Left lung (tissue), 14 donors: ENCODE measurements at regions of chr11 and their contacts with region 1.

Region 1: GRCh38 chr11:9757809-9758636 is 94.1 kb downstream of the SWAP70 start:
- DNase-seq: peak; percentile 78 to 97 (median 90)
- ATAC-seq: peak; percentile 90
- H3K4me3 ChIP-seq: peak overlapping the region; percentile 62 to 79
- H3K27ac ChIP-seq: peak overlapping the region; percentile 83 to 90
- H3K4me1 ChIP-seq: peaks cover 6 to 44% of the 10 kb centered on the region in 2 donors
- H3K27me3 ChIP-seq: no peaks in the 10 kb centered on the region
- CTCF ChIP-seq: peak; percentile 85 to 91

Region 2: DNA sequence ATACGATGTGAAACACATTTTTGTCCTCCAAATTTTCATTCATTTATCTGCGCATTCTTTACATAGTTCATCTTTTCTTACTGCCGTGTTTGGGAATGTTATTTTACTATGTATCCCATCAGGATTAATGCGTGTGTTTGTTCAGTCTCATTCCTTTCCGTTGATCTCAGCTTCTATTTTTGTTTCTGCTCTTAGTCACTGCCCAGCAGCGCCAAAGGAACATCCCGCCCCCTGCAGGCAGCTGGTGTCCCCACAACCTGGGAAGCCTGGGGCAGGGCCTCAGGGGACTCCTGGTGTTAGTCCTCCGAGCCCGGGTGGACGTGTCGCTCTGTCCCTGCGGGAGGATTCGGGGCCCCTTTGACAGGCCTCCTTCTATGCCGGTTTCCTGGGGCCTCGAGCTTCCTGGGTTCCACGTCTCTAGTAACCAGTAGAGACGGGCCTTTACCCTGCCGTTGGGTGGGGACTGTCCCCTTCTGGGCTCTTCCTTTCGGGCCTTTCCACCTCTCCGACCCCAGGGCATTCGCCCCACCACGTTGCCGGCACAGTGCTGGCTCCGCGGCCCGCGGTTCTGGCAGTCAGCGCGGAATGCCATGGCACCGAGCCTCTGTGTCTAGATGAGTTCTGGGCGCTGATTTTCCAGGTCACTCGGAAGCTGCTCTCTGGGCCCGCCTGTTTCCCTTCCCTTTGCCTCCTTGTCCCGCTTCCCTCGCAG is 144.7 kb before region 1 on chr11:
- intact Hi-C with region 1: loop called in 1 of 2 experiments (anchors 10 kb)
- DNase-seq: peak; percentile 93 to 98 (median 96)
- ATAC-seq: peak; percentile 92
- H3K4me3 ChIP-seq: peak overlapping the region; percentile 40 to 53
- H3K27ac ChIP-seq: peak overlapping the region; percentile 87 to 98
- H3K4me1 ChIP-seq: peaks cover 3 to 26% of the 10 kb centered on the region in 2 donors
- H3K27me3 ChIP-seq: no peaks in the 10 kb centered on the region
- CTCF ChIP-seq: peak; percentile 90 to 96

Region 3: GRCh38 chr11:9951714-9952275 is 193.8 kb after region 1 on chr11:
- intact Hi-C with region 1: loop called in 1 of 2 experiments (anchors 10 kb)
- DNase-seq: peak in 1 of 4 donors; percentile 31
- ATAC-seq: no peak
- H3K4me3 ChIP-seq: no peak overlapping the region
- H3K27ac ChIP-seq: no peak overlapping the region
- H3K4me1 ChIP-seq: no peaks in the 10 kb centered on the region
- H3K27me3 ChIP-seq: no peaks in the 10 kb centered on the region
- CTCF ChIP-seq: no peak

Region 4: GRCh38 chr11:9972989-9973388 is 215.0 kb after region 1 on chr11:
- intact Hi-C with region 1: loop called in 1 of 2 experiments (anchors 5 kb)
- DNase-seq: peak in 2 of 4 donors; percentile 35 to 63
- ATAC-seq: peak; percentile 88
- H3K4me3 ChIP-seq: no peak overlapping the region
- H3K27ac ChIP-seq: no peak overlapping the region
- H3K4me1 ChIP-seq: no peaks in the 10 kb centered on the region
- H3K27me3 ChIP-seq: no peaks in the 10 kb centered on the region
- CTCF ChIP-seq: peak; percentile 42 to 53

Region 5: GRCh38 chr11:10307442-10308207 is 549.6 kb after region 1 on chr11:
- intact Hi-C with region 1: loop called in 1 of 2 experiments (anchors 10 kb)
- DNase-seq: peak; percentile 88 to 96 (median 88)
- ATAC-seq: peak; percentile 66
- H3K4me3 ChIP-seq: peak overlapping the region; percentile 37 to 60
- H3K27ac ChIP-seq: peak overlapping the region; percentile 36 to 94
- H3K4me1 ChIP-seq: peaks cover 27 to 65% of the 10 kb centered on the region in 2 donors
- H3K27me3 ChIP-seq: peaks cover 0 to 38% of the 10 kb centered on the region in 2 donors
- CTCF ChIP-seq: peak; percentile 97 to 98